Mammary epithelial cell (primary cell): ENCODE measurements at regions of chr7 and their contacts with region 1.

Region 1: DNA sequence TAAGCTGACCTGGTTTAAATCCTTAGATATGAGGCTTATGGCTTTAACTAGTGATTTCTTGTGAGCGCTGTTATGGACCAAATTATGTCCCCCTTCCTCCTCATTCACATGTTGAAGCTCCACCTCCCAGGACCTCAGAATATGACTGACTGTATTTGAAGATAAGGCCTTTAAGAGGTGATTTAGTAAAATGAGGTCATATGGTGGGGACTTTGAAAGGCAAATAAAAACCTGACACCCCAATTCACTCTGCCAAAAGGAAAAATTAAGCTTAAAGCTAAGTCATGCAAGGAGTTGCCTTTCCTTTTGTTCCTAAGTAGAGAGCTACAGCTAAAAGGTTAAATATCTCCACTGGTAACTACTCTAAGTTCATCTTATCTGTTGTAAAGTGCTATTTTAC is 36.4 kb upstream of the FIGNL1 start:
- DNase-seq: no peak
- H3K4me3 ChIP-seq: no peak overlapping the region
- H3K27ac ChIP-seq: no peak overlapping the region
- H3K4me1 ChIP-seq: no peaks in the 10 kb centered on the region
- H3K27me3 ChIP-seq: no peaks in the 10 kb centered on the region
- CTCF ChIP-seq: no peak

Region 2: DNA sequence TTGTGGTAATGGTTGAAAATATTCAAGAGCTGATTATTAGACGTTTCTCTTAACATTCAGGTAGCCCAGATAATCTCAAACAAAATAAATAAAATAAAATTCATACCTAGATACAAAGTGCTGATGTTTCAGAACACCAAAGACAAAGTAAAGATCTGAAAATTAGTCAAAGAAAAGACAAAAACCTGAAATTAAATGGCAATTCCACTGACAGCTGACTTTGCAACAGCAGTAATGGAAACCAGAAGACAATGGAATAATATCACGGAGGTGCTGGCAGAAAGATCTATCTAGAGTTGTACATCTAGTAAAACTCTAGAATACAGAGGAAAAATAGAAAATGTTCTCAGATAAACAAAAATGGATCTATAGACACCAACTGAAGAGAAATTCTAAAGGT is 240.0 kb before region 1 on chr7:
- CTCF ChIA-PET with region 1: no interaction called
- dilution Hi-C with region 1: no loop called
- in situ Hi-C with region 1: no loop called
- intact Hi-C with region 1: no loop called
- DNase-seq: no peak
- H3K4me3 ChIP-seq: no peak overlapping the region
- H3K27ac ChIP-seq: no peak overlapping the region
- H3K4me1 ChIP-seq: no peaks in the 10 kb centered on the region
- H3K27me3 ChIP-seq: peaks cover 2% of the 10 kb centered on the region
- CTCF ChIP-seq: no peak

Region 3: DNA sequence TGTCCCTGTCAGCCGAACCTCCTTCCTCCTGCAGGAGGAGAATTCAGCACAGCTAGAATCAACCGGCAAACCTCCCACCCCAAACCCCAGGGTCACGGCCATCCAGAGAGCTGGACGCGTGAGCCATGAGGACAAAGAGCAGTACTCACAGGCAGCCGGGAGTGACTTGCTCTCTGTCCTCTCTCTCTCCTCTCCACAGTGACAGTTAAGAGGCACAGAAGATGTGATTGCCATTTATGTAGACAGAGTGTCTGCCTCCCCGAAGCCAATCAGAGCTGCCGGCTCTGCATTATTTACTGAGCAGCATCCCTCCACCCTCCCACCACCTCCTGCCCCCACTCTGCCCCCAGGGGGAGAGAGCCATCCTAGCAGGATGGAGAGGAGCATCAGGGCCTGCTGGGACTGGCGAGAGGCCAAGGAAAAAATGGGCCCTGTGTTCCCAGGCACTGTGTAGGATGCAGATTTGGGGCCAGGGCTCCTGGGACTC is 74.4 kb after region 1 on chr7:
- CTCF ChIA-PET with region 1: no interaction called
- dilution Hi-C with region 1: loop called (anchors 5 kb)
- in situ Hi-C with region 1: no loop called
- intact Hi-C with region 1: no loop called
- DNase-seq: no peak
- H3K4me3 ChIP-seq: no peak overlapping the region
- H3K27ac ChIP-seq: no peak overlapping the region
- H3K4me1 ChIP-seq: no peaks in the 10 kb centered on the region
- H3K27me3 ChIP-seq: peaks cover 5% of the 10 kb centered on the region
- CTCF ChIP-seq: no peak